Cardiac septum (tissue), 1 donor: ENCODE measurements at regions of chr2 and their contacts with region 1.

Region 1: GRCh38 chr2:219177552-219178376 is at the start of gene RETREG2:
- DNase-seq: peak; percentile 92
- total RNA-seq, gene RETREG2: 31.2 TPM

Region 2: GRCh38 chr2:219041252-219041651 is 136.5 kb before region 1 on chr2 and contains the start of gene CFAP65:
- intact Hi-C with region 1: no loop called
- DNase-seq: peak; percentile 75
- total RNA-seq, gene CFAP65: not detected

Region 3: GRCh38 chr2:219160186-219161017 is 17.4 kb before region 1 on chr2 and contains the start of gene NHEJ1:
- intact Hi-C with region 1: loop called (anchors 1 kb)
- DNase-seq: peak; percentile 97
- total RNA-seq, gene NHEJ1: 6.7 TPM

Region 4: DNA sequence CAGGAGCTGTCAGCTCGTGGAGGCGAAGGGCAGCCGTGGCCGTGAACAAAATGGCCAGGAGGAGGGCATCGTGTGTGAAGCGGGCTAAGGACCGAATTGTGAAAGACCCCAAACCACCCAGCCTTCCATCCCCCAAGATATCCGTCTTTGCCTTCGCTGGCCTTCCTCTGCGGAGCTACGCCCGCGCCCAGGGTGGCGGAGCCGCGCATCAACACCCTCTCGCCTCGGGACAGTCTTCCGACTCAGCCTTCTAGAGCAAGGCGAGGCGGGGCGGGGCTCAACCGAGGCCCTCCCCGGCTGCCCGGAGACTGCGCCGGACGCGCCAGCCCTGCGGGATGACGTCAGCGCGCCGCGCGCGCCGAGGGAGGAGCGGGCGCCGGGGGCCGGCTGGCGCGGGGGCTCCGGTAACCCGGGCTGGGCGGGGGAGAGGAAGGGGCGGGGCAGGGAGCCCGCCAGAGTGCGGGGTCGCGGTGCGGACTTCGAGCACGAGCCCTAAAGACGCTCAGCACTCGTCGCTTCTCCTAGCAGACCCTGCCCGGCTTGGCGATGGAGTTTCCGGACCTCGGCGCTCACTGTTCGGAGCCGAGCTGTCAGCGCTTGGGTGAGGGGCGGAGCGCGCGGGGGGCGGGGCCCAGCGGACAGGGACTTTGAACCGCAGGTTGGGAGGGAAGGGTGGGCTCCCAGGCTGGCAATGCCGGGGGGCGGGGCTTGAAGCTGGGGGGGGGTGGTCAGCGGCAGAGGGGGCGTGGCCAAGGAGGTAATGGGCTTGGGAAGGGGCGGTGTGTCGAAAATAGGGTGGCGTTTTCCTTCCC is 28.9 kb after region 1 on chr2 and contains the start of gene ZFAND2B:
- intact Hi-C with region 1: loop called (anchors 2 kb)
- DNase-seq: peak; percentile 98
- total RNA-seq, gene ZFAND2B: 23.9 TPM

Region 5: DNA sequence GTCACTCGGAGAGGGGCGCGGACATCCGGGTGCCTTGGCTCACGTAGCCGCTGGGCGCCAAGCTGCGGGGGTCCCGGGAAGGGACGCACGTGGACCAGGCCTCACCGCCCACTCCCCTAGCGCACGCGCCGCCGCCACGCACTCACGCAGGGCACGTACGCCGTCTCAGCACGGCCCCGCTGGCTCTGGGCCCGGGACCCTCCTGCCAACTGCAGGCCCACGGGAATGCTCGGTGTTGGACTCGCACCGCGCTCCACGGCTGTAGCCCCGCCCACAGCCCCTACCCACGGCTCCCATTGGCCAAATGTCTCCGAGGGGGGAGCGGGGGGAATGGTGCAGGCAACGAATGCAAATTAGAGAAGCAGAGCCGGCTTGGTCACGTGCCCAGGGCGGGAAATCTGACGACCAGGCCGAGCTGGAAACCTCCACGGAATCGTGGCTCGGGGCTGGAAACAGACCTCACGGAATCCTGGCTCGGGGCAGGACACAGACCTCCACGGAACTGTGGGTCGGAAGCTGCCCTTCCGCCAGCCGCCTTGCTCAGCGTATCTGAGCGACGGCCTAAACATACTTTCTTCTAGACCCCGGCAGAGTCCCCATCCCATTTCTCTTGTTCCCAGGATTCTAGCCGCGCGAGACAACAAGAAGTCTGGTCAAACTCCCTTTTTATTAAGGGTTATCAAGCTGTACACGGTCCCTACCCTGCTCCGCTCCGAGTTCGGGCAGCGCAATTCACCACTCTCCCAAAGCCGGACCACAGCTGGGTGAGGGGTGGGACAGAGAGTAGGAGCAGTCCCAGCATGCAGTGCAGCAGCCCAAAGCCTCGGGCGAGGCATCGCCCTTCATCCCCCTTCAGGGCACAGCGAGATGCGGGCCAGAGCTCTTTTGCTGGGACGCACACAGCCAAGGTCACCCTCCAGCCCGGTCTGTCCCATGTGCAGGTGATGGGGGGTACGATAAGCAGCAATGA is 41.3 kb after region 1 on chr2 and contains the start of gene ABCB6:
- intact Hi-C with region 1: loop called (anchors 2 kb)
- DNase-seq: peak; percentile 98
- total RNA-seq, gene ABCB6: 17.4 TPM

Region 6: GRCh38 chr2:219278655-219279516 is 101.1 kb after region 1 on chr2 and contains the start of gene DNAJB2:
- intact Hi-C with region 1: loop called (anchors 1 kb)
- DNase-seq: peak; percentile 100
- total RNA-seq, gene DNAJB2: 78.0 TPM

Region 7: DNA sequence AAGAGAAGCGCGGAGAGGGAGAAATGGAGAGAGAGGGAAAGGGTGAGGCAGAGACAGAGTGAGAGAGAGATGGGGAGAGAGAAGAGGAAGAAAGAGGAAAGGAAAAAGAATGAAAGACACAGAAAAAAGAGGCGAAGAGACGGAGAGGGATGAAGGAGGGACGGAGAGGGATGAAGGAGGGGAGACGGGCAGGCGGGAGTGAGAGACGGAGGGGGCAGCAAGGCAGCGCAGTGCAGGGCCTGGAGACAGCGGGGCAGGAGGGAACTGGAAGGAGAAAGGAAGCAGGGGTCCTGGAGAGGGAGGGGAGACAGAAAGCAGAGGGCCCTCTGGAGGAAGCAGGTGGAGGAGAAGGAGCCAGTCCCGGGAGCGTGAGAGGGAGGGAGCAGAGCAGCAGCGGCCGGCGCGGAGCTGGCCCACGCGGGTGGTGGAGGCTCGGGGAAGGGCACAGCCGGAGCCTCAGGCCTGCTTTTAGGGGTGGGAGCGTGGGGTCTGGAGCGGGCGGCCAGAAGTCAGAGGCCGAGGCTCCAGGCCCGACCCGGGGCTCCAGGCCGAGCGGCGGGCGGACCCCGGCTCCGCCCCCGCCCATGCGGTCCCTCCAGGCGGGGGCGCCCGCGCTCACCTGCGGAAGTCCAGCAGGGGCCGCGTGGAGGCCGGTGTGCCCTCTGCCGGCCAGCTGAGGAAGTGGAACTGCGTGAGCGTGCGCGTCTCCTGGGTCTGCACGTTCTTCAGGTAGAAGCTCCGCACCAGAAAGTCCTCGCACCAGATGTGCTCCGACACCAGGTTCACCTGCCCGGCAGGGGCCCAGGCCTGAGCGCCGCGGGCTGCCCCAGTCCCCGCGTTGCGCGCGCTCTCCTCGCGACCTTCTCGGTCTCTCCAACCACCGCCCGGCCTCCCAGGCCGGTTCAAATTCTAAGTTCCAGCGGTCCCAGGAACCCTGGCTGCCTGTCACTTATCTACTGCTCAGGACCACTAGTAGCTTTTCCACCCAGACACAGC is 116.9 kb after region 1 on chr2:
- intact Hi-C with region 1: loop called (anchors 1 kb)
- DNase-seq: peak; percentile 97

Region 8: GRCh38 chr2:219388127-219388844 is 210.5 kb after region 1 on chr2:
- intact Hi-C with region 1: loop called (anchors 5 kb)
- DNase-seq: peak; percentile 99